Activated T-helper 1 cell treated with anti-CD3 and anti-CD28 coated beads, Interleukin-12 subunit alpha, Interleukin-12 subunit beta, Interleukin-2, Interleukin-4 antibody, amounts not matched to agents 30 ng/mL and 10 ng/mL and 1 ng/mL, durations not matched to agents 14 hours and 24 hours and 36 hours (primary cell): ENCODE measurements at regions of chr6 and their contacts with region 1.

Region 1: DNA sequence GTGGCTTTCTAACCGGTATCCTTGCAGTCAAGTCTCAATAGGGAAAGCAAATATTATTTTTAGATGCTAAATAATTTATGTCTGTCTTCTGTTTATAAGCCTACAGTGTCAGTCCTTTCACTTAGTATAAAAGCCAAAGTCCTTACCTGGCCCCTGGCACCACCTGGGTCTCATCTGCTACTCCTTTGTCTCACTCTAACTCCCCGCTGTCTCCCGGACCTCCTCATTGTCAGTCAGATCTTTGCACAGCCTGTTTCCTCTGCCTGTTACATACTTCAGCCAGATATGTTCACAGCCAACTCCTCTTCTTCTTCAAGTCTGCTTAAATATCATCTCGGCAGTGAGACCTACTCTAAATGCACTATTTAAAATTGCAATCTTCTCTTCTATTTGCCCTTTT is 84.2 kb downstream of the THEMIS start:
- DNase-seq: no peak
- H3K4me3 Mint-ChIP-seq: no peak overlapping the region
- H3K27ac Mint-ChIP-seq: no peak overlapping the region
- H3K4me1 Mint-ChIP-seq: peaks cover 73% of the 10 kb centered on the region
- H3K27me3 Mint-ChIP-seq: no peaks in the 10 kb centered on the region

Region 2: DNA sequence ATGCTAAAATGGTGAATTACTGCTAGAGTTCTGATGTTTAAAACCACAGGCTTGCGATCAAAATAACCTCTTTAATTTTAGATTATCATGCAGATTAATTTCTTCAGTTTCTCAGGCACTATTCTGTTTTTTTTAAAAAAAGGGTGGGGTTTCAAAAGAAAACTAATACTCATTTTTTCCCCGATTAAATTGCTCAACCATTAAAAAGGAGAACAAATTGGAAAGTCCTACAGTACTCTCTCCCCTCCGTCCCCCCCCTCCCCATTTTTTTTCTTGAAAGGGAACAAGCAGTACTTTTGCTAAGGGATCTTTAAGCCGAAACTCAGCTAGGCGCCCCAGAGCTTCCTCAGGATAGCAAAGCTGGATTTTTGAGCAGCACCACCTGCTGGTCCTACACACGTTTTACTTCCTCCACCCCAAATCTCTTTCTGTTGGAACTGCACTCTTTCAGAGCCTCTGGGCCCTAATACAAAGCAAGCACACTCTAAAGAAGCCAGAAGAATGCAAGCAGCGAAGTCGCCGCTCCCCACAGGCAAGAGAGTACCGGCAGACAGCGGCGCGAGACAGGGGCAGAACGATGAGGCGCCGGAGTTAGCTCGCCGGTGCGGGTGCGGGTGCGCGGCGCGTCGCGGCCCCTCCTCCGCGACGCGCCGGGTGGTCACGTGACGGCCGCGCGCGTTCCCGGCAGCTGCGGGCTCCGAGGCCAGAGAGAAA is 550.3 kb before region 1 on chr6 and contains the start of gene RNF146:
- intact Hi-C with region 1: loop called (anchors 5 kb)
- DNase-seq: peak; percentile 63
- H3K4me3 Mint-ChIP-seq: peak within 1 kb of the TSS; percentile 100
- H3K27ac Mint-ChIP-seq: peak within 1 kb of the TSS; percentile 100
- H3K4me1 Mint-ChIP-seq: peaks cover 42% of the 10 kb centered on the region
- H3K27me3 Mint-ChIP-seq: peaks cover 9% of the 10 kb centered on the region
- total RNA-seq, gene RNF146: 18.3 and 20.5 TPM in 2 replicates

Region 3: DNA sequence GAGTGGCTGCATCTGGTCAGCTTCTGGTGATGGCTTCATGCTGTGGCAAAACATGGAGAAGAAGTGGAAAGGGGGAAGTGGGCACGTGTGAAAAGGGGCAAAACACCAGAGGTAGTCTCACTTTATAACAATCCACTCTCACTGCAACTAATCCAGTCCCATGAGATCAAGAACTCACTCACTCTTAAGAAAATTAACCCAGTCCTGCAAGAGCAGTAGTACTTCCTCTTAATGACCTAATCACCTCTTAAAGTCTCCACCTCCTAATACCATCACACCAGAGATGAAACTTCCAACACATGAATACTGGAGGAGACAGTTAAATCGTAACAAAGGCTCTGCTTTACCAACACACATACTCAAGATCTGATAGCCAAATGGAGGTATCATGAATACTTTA is 68.4 kb before region 1 on chr6:
- intact Hi-C with region 1: loop called (anchors 5 kb)
- DNase-seq: no peak
- H3K4me3 Mint-ChIP-seq: no peak overlapping the region
- H3K27ac Mint-ChIP-seq: no peak overlapping the region
- H3K4me1 Mint-ChIP-seq: peaks cover 19% of the 10 kb centered on the region
- H3K27me3 Mint-ChIP-seq: no peaks in the 10 kb centered on the region

Region 4: DNA sequence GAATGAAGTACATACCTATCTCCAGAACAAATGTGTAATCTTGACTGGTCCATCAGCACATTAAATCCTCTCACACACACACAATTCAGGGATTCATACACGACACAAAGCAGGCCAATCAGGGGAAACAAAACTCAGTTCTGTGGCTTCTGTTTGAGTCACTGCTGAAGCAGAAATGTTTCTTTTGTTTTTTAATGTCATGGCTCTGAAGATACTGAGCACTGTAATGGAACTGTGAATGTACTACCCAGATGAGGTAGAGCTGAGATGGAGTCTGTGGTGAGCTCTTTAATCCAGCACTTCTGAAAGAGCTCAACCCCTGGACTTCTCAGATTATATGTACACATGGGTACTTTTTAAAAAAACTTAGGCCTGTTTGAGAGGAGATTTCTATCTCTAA is 32.2 kb before region 1 on chr6:
- intact Hi-C with region 1: loop called (anchors 5 kb)
- DNase-seq: no peak
- H3K4me3 Mint-ChIP-seq: no peak overlapping the region
- H3K27ac Mint-ChIP-seq: peak overlapping the region; percentile 53
- H3K4me1 Mint-ChIP-seq: peaks cover 43% of the 10 kb centered on the region
- H3K27me3 Mint-ChIP-seq: no peaks in the 10 kb centered on the region

Region 5: GRCh38 chr6:127833336-127833735 is 16.7 kb after region 1 on chr6:
- intact Hi-C with region 1: no loop called
- DNase-seq: no peak
- H3K4me3 Mint-ChIP-seq: no peak overlapping the region
- H3K27ac Mint-ChIP-seq: no peak overlapping the region
- H3K4me1 Mint-ChIP-seq: peaks cover 16% of the 10 kb centered on the region
- H3K27me3 Mint-ChIP-seq: no peaks in the 10 kb centered on the region

Region 6: DNA sequence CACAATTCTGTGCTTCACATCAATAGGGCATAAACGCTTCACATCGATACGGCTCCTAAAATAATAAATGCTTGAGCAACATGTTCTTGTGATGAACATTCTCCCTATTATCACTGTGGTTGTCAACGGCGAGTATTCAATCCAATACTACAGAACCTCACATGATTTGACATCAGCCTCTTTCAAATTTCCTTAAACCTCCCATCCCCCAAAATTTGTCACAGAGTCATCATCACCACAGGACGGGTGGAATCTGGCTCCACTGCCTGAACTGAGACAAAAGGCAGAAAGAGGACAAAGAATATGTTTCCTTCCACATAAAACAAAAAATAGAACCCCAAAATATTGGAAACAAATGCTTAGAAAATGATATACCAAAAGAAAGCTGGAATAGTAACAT is 76.9 kb after region 1 on chr6:
- intact Hi-C with region 1: loop called (anchors 5 kb)
- DNase-seq: no peak
- H3K4me3 Mint-ChIP-seq: peak overlapping the region; percentile 83
- H3K27ac Mint-ChIP-seq: peak overlapping the region; percentile 93
- H3K4me1 Mint-ChIP-seq: peaks cover 54% of the 10 kb centered on the region
- H3K27me3 Mint-ChIP-seq: no peaks in the 10 kb centered on the region

Region 7: GRCh38 chr6:127938701-127939100 is 122.1 kb after region 1 on chr6:
- intact Hi-C with region 1: no loop called
- DNase-seq: no peak
- H3K4me3 Mint-ChIP-seq: no peak overlapping the region
- H3K27ac Mint-ChIP-seq: peak overlapping the region; percentile 87
- H3K4me1 Mint-ChIP-seq: peaks cover 51% of the 10 kb centered on the region
- H3K27me3 Mint-ChIP-seq: no peaks in the 10 kb centered on the region

Region 8: DNA sequence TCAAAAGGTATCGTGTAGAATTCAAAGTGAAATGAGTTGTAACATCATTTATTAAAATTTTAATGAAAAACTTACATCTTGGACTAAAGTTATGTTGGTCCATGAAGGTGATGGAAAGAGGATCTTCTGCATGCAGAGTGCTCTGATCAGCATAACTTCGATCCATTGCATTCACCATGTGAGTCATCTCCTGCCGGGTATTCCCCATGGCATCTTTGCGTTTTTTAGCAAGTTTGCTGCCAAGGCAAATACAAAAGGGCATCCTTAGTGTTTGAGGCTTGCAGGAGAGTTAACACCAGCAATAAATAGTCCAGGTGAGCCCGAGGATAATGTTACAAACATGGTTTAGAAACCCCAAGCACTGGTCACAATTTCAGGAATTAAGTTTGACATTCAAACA is 188.4 kb after region 1 on chr6:
- intact Hi-C with region 1: no loop called
- DNase-seq: no peak
- H3K4me3 Mint-ChIP-seq: no peak overlapping the region
- H3K27ac Mint-ChIP-seq: no peak overlapping the region
- H3K4me1 Mint-ChIP-seq: no peaks in the 10 kb centered on the region
- H3K27me3 Mint-ChIP-seq: peaks cover 4% of the 10 kb centered on the region

Region 9: GRCh38 chr6:128172752-128173682 is 356.4 kb after region 1 on chr6:
- intact Hi-C with region 1: no loop called
- DNase-seq: no peak
- H3K4me3 Mint-ChIP-seq: no peak overlapping the region
- H3K27ac Mint-ChIP-seq: no peak overlapping the region
- H3K4me1 Mint-ChIP-seq: no peaks in the 10 kb centered on the region
- H3K27me3 Mint-ChIP-seq: peaks cover 4% of the 10 kb centered on the region